ENCODE measurements at regions of chr12 and their contacts with region 1.

Region 1: GRCh38 chr12:32302218-32303173 is 96.9 kb upstream of the FGD4 start:
- DNase-seq: no peak
- H3K4me3 ChIP-seq: no peak overlapping the region
- H3K27ac ChIP-seq: no peak overlapping the region
- H3K4me1 ChIP-seq: no peaks in the 10 kb centered on the region
- H3K27me3 ChIP-seq: no peaks in the 10 kb centered on the region
- CTCF ChIP-seq: peak; percentile 68

Region 2: GRCh38 chr12:31659087-31659933 is 643.2 kb before region 1 on chr12 and contains the start of gene ETFBKMT:
- intact Hi-C with region 1: loop called (anchors 10 kb)
- DNase-seq: peak; percentile 84
- H3K4me3 ChIP-seq: peak within 1 kb of the TSS; percentile 86
- H3K27ac ChIP-seq: peak within 1 kb of the TSS; percentile 98
- H3K4me1 ChIP-seq: peaks cover 28% of the 10 kb centered on the region
- H3K27me3 ChIP-seq: no peaks in the 10 kb centered on the region
- CTCF ChIP-seq: peak; percentile 67
- total RNA-seq, gene ETFBKMT: 6.6 TPM

Region 3: GRCh38 chr12:31682136-31682962 is 620.1 kb before region 1 on chr12:
- intact Hi-C with region 1: loop called (anchors 10 kb)
- DNase-seq: peak; percentile 23
- H3K4me3 ChIP-seq: no peak overlapping the region
- H3K27ac ChIP-seq: no peak overlapping the region
- H3K4me1 ChIP-seq: no peaks in the 10 kb centered on the region
- H3K27me3 ChIP-seq: no peaks in the 10 kb centered on the region
- CTCF ChIP-seq: peak; percentile 78